ENCODE measurements at regions of chr5 and their contacts with region 1.

Region 1: DNA sequence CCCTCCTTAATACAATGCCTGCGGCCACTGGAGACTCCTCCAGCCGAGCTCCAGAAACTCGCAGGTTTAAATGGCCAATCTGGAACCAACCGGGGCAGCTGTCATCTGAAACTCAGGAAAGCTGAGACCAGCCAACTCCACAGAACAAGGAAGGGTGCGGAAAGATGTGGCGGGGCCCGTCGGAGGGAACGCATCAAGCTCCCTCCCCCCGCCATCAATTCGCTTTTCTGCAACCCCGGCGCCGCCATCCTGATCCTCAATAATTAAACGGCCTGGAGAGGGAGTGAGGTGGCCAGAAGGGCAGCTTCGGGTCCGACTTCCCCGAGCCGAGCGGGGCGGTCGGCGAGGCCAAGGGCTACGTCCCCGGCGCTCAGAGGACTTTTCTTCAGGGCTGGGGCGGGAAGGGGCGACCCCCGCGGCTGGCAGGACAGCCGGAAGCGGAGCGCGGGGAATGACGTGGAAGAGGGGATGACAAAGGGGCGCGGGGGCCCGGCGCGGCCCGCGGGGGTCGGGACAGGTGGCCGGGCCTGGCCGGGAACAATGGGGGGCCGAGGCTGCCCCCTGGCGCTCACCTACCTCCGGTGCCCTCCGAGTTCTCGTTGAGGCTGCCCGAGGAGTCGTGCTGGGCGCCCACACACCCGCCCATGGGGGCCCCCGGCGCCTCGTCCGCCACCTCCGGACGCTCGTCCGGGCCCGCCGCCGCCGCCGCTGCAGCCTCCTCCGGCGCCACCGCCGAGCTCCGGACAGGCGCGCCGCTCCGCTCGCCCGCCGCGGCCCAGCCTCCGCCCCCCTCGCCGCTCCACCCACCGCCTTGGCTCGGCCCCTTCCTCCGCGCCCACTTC is at the start of gene UBTD2:
- DNase-seq: peak; percentile 59 to 91
- H3K4me3 ChIP-seq: peak within 1 kb of the TSS; percentile 98
- H3K27ac ChIP-seq: peak within 1 kb of the TSS; percentile 46
- H3K4me1 ChIP-seq: peaks cover 25% of the 10 kb centered on the region
- H3K27me3 ChIP-seq: no peaks in the 10 kb centered on the region
- CTCF ChIP-seq: peak; percentile 62
- total RNA-seq, gene UBTD2: 16.4 and 21.7 TPM in 2 replicates

Region 2: DNA sequence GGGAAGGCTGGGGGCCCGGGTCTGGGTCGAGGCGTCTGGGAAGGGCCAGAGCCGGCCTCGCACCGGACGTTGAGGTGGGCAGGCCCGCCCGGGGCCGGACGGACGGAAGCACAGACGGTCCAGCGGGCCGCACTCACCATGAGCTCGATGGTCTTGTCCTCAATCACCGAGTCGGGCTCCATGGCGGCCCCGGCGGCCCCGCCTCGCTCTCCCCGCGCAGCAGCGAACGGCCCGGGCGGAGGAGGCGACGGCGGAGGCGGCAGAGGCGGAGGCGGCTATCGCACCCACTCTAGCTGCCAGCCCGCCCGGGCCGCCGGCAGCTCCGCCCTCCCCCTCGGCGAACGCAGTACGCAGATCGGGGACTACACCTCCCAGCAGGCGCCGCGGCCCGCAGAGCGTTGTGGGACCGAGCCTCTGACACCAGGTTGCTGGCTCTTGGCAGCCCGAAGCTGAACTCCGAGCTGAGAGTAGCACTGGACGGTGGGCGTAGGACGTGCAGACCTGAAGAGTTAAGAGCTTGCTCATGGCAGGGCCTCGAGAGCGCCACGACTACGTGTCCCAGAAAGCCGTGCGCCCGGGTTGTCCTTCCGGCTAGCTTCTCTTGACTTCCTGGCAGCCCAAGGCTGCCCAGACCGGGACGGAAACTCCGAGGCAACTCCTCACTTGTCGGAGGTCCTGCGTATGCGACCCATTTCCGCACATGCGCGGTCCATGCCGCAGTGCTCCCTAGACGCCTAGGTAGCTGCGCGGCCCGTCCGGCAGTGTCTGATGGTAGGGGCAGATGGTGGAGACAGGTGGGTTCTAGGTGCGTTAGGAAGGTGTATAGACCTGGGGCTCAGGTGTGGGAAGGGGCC is 276.7 kb before region 1 on chr5 and contains the start of gene FBXW11:
- CTCF ChIA-PET with region 1: no interaction called
- POLR2A ChIA-PET with region 1: interaction called, 3 read pairs
- intact Hi-C with region 1: loop called (anchors 5 kb)
- DNase-seq: peak; percentile 95 to 96
- H3K4me3 ChIP-seq: peak within 1 kb of the TSS; percentile 86
- H3K27ac ChIP-seq: peak within 1 kb of the TSS; percentile 68
- H3K4me1 ChIP-seq: peaks cover 29% of the 10 kb centered on the region
- H3K27me3 ChIP-seq: no peaks in the 10 kb centered on the region
- CTCF ChIP-seq: no peak
- total RNA-seq, gene FBXW11: 54.8 and 58.7 TPM in 2 replicates

Region 3: GRCh38 chr5:172303572-172304335 is 20.5 kb after region 1 on chr5:
- CTCF ChIA-PET with region 1: no interaction called
- POLR2A ChIA-PET with region 1: interaction called, 8 read pairs
- intact Hi-C with region 1: loop called (anchors 1 kb)
- DNase-seq: peak in 1 of 2 experiments; percentile 64
- H3K4me3 ChIP-seq: peak overlapping the region; percentile 40; the same call in 1 of the 2 replicates
- H3K27ac ChIP-seq: peak overlapping the region; percentile 77
- H3K4me1 ChIP-seq: peaks cover 29% of the 10 kb centered on the region
- H3K27me3 ChIP-seq: no peaks in the 10 kb centered on the region
- CTCF ChIP-seq: no peak